ENCODE measurements at regions of chr3 and their contacts with region 1.

Region 1: GRCh38 chr3:123028233-123028828 is 768 bp upstream of the SEMA5B start:
- DNase-seq: peak; percentile 84
- H3K4me3 ChIP-seq: peak overlapping the region; percentile 40
- H3K27ac ChIP-seq: no peak overlapping the region
- H3K4me1 ChIP-seq: peaks cover 18% of the 10 kb centered on the region
- H3K27me3 ChIP-seq: peaks cover 75% of the 10 kb centered on the region
- CTCF ChIP-seq: peak; percentile 64

Region 2: GRCh38 chr3:121545574-121546455 is 1482.5 kb before region 1 on chr3 and contains the start of gene POLQ:
- CTCF ChIA-PET with region 1: interaction called, 8 read pairs
- POLR2A ChIA-PET with region 1: no interaction called
- intact Hi-C with region 1: loop called (anchors 5 kb)
- DNase-seq: peak; percentile 97
- H3K4me3 ChIP-seq: peak within 1 kb of the TSS; percentile 92
- H3K27ac ChIP-seq: peak within 1 kb of the TSS; percentile 70
- H3K4me1 ChIP-seq: peaks cover 6% of the 10 kb centered on the region
- H3K27me3 ChIP-seq: no peaks in the 10 kb centered on the region
- CTCF ChIP-seq: no peak
- total RNA-seq, gene POLQ: 20.3 and 22.9 TPM in 2 replicates

Region 3: GRCh38 chr3:121735047-121735696 is 1293.2 kb before region 1 on chr3:
- CTCF ChIA-PET with region 1: no interaction called
- POLR2A ChIA-PET with region 1: no interaction called
- intact Hi-C with region 1: no loop called
- DNase-seq: no peak
- H3K4me3 ChIP-seq: no peak overlapping the region
- H3K27ac ChIP-seq: no peak overlapping the region
- H3K4me1 ChIP-seq: peaks cover 4% of the 10 kb centered on the region
- H3K27me3 ChIP-seq: no peaks in the 10 kb centered on the region
- CTCF ChIP-seq: no peak

Region 4: DNA sequence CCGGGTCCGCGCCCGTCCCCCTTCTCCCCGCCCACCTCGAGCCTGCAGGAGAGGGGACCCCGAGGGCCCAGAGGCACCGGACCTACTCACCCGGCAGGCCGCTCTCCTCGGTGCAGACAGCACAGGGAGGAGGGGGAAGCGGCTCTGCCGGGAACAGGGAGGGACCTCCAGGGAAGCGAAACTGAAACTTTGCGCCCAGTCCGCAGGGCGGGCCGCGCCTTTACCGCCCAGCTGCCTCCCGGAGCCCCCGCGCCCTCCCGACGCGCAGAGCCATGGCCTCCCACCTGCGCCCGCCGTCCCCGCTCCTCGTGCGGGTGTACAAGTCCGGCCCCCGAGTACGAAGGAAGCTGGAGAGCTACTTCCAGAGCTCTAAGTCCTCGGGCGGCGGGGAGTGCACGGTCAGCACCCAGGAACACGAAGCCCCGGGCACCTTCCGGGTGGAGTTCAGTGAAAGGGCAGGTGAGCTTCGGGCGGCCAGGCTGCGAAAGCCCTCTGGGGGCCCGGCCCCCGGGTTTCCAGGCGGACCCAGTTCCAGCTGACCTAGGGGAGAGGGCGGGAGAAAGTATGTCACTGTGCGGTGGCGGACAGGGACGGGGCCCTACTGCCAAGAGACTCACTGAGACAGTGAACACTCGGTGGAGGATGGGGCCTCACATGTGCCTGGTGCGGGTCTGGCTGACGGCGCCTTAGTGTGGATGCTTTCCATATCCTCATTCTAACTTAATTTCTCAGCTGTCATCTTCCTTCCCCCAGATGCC is 464.0 kb before region 1 on chr3 and contains the starts of genes DTX3L and PARP9:
- CTCF ChIA-PET with region 1: no interaction called
- POLR2A ChIA-PET with region 1: no interaction called
- intact Hi-C with region 1: loop called (anchors 5 kb)
- DNase-seq: peak; percentile 80
- H3K4me3 ChIP-seq: peak within 1 kb of the TSS; percentile 63
- H3K27ac ChIP-seq: peak within 1 kb of the TSS; percentile 83
- H3K4me1 ChIP-seq: peaks cover 15% of the 10 kb centered on the region
- H3K27me3 ChIP-seq: no peaks in the 10 kb centered on the region
- CTCF ChIP-seq: no peak
- total RNA-seq, gene DTX3L: 16.6 and 18.9 TPM in 2 replicates
- total RNA-seq, gene PARP9: 10.6 and 10.8 TPM in 2 replicates

Region 5: GRCh38 chr3:122858373-122858772 is 170.0 kb before region 1 on chr3:
- CTCF ChIA-PET with region 1: no interaction called
- POLR2A ChIA-PET with region 1: no interaction called
- intact Hi-C with region 1: loop called (anchors 2 kb)
- DNase-seq: peak; percentile 29
- H3K4me3 ChIP-seq: no peak overlapping the region
- H3K27ac ChIP-seq: no peak overlapping the region
- H3K4me1 ChIP-seq: no peaks in the 10 kb centered on the region
- H3K27me3 ChIP-seq: no peaks in the 10 kb centered on the region
- CTCF ChIP-seq: peak; percentile 60

Region 6: DNA sequence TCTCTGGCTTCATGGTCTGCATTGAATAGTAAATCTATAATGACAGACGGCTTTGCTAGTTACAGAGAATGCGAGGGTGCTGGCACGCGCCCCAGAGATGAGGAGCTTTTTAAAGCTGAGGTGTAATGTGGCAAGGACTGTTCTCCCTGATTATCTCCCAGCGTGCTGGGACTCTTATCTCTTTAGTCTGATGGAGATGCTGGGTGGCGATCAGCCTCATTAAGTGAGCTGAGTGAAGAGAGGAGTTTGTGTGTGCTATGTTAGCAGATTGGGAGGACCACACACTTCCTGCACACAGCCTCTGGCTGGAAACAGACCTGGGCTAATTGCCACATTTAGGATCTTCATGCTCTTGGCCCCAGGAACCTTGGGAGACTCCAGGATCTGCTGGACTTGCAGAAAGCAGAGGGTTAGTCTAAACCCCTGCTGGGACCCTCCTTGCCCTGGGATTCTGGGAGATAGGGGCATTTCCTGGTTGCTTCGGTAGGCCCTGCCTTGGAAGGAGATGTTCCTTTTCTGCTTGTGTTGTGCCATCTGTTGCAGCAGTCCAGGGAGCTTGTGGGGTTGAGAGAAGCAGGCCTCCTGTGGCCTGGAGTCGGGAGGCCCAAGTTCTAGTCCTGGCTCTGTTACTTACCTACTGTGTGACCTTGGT is 53.5 kb after region 1 on chr3:
- CTCF ChIA-PET with region 1: no interaction called
- POLR2A ChIA-PET with region 1: no interaction called
- intact Hi-C with region 1: no loop called
- DNase-seq: peak; percentile 71
- H3K4me3 ChIP-seq: no peak overlapping the region
- H3K27ac ChIP-seq: no peak overlapping the region
- H3K4me1 ChIP-seq: peaks cover 33% of the 10 kb centered on the region
- H3K27me3 ChIP-seq: no peaks in the 10 kb centered on the region
- CTCF ChIP-seq: no peak

Region 7: DNA sequence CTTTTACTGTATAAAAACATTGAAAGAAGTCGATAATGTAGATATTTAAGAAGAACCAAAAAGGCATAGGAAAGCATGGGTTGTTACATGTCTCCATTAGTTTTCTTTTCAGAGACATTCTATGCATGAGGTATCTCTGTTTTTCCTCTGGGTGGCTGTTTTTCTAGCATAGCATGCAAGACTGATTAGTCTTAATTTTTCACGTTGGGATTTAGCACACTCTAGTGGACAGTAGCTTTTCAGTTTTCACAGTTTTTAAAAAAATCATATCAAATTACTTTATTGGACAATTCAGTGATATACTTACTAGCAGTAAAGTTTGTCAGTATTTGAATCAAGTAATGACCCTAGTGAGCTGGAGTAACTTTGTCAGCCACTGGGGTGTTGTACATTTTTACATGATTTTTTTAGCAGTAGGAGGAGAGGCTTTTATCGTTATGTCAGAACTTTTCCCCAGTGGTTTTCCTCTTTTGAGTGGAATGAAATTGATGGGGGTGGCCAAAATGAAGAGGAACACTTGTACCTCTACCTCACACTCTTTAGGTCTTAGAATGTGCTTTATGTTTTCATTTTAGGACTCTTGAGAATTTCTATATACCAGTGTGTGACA is 230.6 kb after region 1 on chr3:
- CTCF ChIA-PET with region 1: no interaction called
- POLR2A ChIA-PET with region 1: no interaction called
- intact Hi-C with region 1: loop called (anchors 5 kb)
- DNase-seq: peak; percentile 80
- H3K4me3 ChIP-seq: no peak overlapping the region
- H3K27ac ChIP-seq: no peak overlapping the region
- H3K4me1 ChIP-seq: peaks cover 21% of the 10 kb centered on the region
- H3K27me3 ChIP-seq: no peaks in the 10 kb centered on the region
- CTCF ChIP-seq: peak; percentile 79

Region 8: DNA sequence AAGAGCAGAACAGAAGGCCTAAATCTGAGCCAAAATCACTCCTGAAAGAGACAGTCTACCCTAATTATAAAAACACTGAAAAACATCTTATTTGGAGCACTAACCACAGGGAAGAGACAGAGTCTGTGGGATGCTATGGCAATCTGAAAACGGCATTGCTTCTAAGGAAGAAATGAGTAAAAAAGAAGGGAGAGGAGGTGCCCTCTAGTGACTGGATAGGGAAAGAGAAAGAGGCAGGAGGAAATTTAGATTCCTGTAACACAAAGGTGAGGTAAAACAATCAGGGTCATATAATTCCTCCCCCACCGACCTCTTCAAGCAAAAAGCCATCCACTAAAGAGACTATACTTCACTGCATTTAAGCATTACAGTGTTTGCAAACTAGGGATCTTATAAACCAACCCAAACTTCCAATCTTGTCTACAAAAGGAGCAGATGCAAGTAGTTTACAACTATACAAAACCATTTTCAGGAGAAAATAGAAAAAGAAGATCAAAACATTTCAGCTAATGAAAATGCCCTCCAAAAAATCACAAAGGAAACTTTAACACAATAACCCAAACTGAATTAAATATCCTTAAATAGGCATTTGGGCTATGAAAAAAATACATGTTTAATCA is 523.9 kb after region 1 on chr3:
- CTCF ChIA-PET with region 1: no interaction called
- POLR2A ChIA-PET with region 1: no interaction called
- intact Hi-C with region 1: no loop called
- DNase-seq: peak; percentile 38
- H3K4me3 ChIP-seq: no peak overlapping the region
- H3K27ac ChIP-seq: no peak overlapping the region
- H3K4me1 ChIP-seq: peaks cover 4% of the 10 kb centered on the region
- H3K27me3 ChIP-seq: no peaks in the 10 kb centered on the region
- CTCF ChIP-seq: peak; percentile 72

Measured in A673 (cell line).